Sigmoid colon (tissue), 7 donors: ENCODE measurements at regions of chr14 and their contacts with region 1.

Region 1: GRCh38 chr14:32913719-32914118 is 25.0 kb upstream of the NPAS3 start:
- DNase-seq: no peak
- H3K4me3 ChIP-seq: no peak overlapping the region
- H3K27ac ChIP-seq: no peak overlapping the region
- H3K4me1 ChIP-seq: no peaks in the 10 kb centered on the region
- H3K27me3 ChIP-seq: no peaks in the 10 kb centered on the region
- CTCF ChIP-seq: no peak
- EP300 ChIP-seq: no peak
- POLR2A ChIP-seq: no peak

Region 2: GRCh38 chr14:32883188-32883587 is 30.5 kb before region 1 on chr14:
- intact Hi-C with region 1: loop called (anchors 2 kb)
- DNase-seq: no peak
- H3K4me3 ChIP-seq: no peak overlapping the region
- H3K27ac ChIP-seq: no peak overlapping the region
- H3K4me1 ChIP-seq: no peaks in the 10 kb centered on the region
- H3K27me3 ChIP-seq: no peaks in the 10 kb centered on the region
- CTCF ChIP-seq: no peak
- EP300 ChIP-seq: no peak
- POLR2A ChIP-seq: no peak